ENCODE measurements at regions of chr17 and their contacts with region 1.

Region 1: GRCh38 chr17:17206124-17206912 is at the start of gene PLD6:
- DNase-seq: peak; percentile 85 to 97 (median 90)
- ATAC-seq: peak; percentile 73
- H3K4me3 ChIP-seq: peak within 1 kb of the TSS; percentile 84
- H3K4me3 Mint-ChIP-seq: peak within 1 kb of the TSS; percentile 93
- H3K27ac ChIP-seq: peak within 1 kb of the TSS; percentile 45 to 53
- H3K27ac Mint-ChIP-seq: peak within 1 kb of the TSS; percentile 92
- H3K4me1 ChIP-seq: peaks cover 34% of the 10 kb centered on the region
- H3K4me1 Mint-ChIP-seq: peaks cover 24% of the 10 kb centered on the region
- H3K27me3 ChIP-seq: no peaks in the 10 kb centered on the region
- H3K27me3 Mint-ChIP-seq: no peaks in the 10 kb centered on the region
- CTCF ChIP-seq: no peak
- total RNA-seq, gene PLD6: 7.1 to 7.5 TPM

Region 2: GRCh38 chr17:17151962-17152361 is 54.4 kb before region 1 on chr17:
- CTCF ChIA-PET with region 1: no interaction called
- POLR2A ChIA-PET with region 1: no interaction called
- intact Hi-C with region 1: loop called (anchors 5 to 10 kb)
- DNase-seq: peak in 5 of 14 experiments; percentile 15 to 64 (median 49)
- ATAC-seq: no peak
- H3K4me3 ChIP-seq: no peak overlapping the region
- H3K4me3 Mint-ChIP-seq: no peak overlapping the region
- H3K27ac ChIP-seq: no peak overlapping the region
- H3K27ac Mint-ChIP-seq: peak overlapping the region; percentile 81
- H3K4me1 ChIP-seq: peaks cover 54% of the 10 kb centered on the region
- H3K4me1 Mint-ChIP-seq: peaks cover 48% of the 10 kb centered on the region
- H3K27me3 ChIP-seq: no peaks in the 10 kb centered on the region
- H3K27me3 Mint-ChIP-seq: no peaks in the 10 kb centered on the region
- CTCF ChIP-seq: no peak

Measured in CD4-positive, alpha-beta T cell (primary cell).